GM10248 (cell line): ENCODE measurements at regions of chr3 and their contacts with region 1.

Region 1: DNA sequence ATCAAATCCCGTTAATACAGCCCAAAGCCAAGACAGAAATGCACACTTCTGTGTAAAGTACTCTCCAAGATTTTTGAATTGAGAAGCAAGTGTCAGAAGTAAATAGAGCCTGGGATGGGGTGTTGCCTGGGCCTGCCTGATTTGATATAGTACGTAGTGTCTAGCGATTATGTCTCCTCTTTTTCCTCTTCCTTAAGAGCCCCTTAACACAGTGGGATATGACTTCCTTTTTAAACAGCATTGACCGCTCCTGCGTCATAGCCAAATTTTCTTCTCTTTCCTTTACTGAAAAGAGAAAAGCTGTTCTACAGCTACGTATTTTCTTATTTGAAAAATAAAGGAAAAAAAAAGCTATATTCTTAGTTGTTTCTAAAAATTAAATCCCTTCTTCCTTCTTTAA is 97.7 kb downstream of the PLCL2 start:
- DNase-seq: no peak
- CTCF ChIP-seq: no peak

Region 2: GRCh38 chr3:16993227-16993626 is 10.8 kb after region 1 on chr3:
- CTCF ChIA-PET with region 1: interaction called, 41 read pairs
- POLR2A ChIA-PET with region 1: no interaction called
- DNase-seq: no peak
- CTCF ChIP-seq: no peak